Psoas muscle (tissue), 8 donors: ENCODE measurements at regions of chr11 and their contacts with region 1.

Region 1: GRCh38 chr11:67265633-67266423 is 445 bp upstream of the GRK2 start:
- DNase-seq: peak; percentile 85 to 92
- ATAC-seq: peak; percentile 79 to 84 (median 82)
- H3K4me3 ChIP-seq: peak overlapping the region; percentile 47
- H3K27ac ChIP-seq: peak overlapping the region; percentile 62
- H3K4me1 ChIP-seq: peaks cover 46% of the 10 kb centered on the region
- H3K27me3 ChIP-seq: no peaks in the 10 kb centered on the region
- CTCF ChIP-seq: peak; percentile 78

Region 2: DNA sequence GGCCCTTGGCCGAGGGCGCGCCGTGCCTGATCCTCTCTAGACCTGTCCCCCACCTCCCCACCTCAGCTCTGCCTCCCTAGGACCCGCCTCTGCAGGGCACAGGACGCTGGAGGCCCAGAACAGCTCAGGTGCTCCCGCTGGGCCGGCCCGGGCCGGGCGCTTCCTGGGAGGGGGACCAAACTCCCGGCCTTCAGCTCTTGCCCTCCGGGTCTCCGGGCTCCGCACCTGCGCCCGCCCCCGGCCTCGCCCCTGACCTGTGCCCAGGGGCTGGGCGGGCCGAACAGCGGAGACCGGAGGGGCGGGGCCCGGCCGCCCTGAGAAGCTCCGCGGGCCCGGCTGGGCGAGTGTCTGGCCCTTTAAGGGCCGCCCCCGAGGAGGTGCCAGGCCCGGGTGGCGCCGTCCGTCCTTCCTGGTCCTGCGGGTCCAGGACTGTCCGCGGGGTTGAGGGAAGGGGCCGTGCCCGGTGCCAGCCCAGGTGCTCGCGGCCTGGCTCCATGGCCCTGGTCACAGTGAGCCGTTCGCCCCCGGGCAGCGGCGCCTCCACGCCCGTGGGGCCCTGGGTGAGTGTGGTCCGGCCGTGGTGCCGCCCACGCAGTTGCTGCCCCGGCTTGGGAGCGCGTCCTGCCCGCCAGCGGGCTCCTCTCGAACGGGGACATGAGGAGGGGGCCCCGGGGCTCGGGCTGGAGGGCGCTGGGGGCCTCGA is 37.5 kb after region 1 on chr11 and contains the start of gene SSH3:
- intact Hi-C with region 1: loop called in 1 of 2 experiments (anchors 5 kb)
- DNase-seq: peak; percentile 81 to 88
- ATAC-seq: peak; percentile 82 to 90 (median 84)
- H3K4me3 ChIP-seq: peak within 1 kb of the TSS; percentile 97
- H3K27ac ChIP-seq: peak within 1 kb of the TSS; percentile 82
- H3K4me1 ChIP-seq: peaks cover 27% of the 10 kb centered on the region
- H3K27me3 ChIP-seq: no peaks in the 10 kb centered on the region
- CTCF ChIP-seq: no peak
- total RNA-seq, gene SSH3: 3.7 to 10.1 (median 6.9) TPM

Region 3: DNA sequence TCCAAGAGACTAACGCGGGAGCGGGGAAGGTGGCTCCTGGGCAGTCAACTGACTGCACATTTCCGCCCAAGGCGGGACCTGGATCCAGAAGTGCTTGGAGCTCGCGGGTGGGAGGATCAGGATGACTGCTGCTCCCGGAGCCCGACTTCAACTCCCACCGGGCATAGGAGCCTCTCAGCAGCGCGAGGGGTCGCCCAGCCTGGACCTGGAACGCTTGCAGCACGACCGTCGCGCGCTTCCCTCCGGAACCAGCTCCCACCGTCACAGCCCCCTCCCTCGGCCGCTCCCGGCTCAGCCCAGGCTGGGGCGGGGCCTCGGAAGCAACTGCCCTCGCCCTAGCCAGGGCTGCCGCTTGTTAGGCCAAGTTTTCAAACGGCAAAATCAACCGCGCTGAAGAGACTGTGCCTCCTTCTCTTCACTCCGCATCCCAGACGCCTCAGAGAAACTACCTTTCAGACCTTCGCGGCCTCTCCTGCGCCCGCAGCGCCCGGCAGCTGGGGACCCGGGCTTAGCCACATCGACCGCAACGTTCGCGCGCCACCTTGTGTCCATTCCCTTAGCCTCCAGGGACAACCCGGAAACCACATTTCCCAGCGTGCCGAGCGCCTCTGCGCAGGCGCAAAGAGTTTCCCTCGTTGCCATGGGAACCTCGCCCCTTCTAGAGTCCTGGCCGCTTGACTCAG is 51.5 kb after region 1 on chr11:
- intact Hi-C with region 1: loop called (anchors 1 to 2 kb)
- DNase-seq: peak; percentile 96 to 98
- ATAC-seq: peak; percentile 94 to 96 (median 95)
- H3K4me3 ChIP-seq: peak overlapping the region; percentile 97
- H3K27ac ChIP-seq: peak overlapping the region; percentile 86
- H3K4me1 ChIP-seq: peaks cover 16% of the 10 kb centered on the region
- H3K27me3 ChIP-seq: no peaks in the 10 kb centered on the region
- CTCF ChIP-seq: peak; percentile 93

Region 4: GRCh38 chr11:67371212-67371910 is 105.5 kb after region 1 on chr11:
- intact Hi-C with region 1: no loop called
- DNase-seq: peak in 1 of 2 donors; percentile 41
- ATAC-seq: peak in 2 of 4 donors; percentile 26 to 27
- H3K4me3 ChIP-seq: peak overlapping the region; percentile 76
- H3K27ac ChIP-seq: no peak overlapping the region
- H3K4me1 ChIP-seq: peaks cover 16% of the 10 kb centered on the region
- H3K27me3 ChIP-seq: peaks cover 0 to 54% (median 11%) of the 10 kb centered on the region in 3 donors
- CTCF ChIP-seq: peak; percentile 28

Region 5: GRCh38 chr11:67382276-67383136 is 116.7 kb after region 1 on chr11:
- intact Hi-C with region 1: loop called (anchors 5 to 10 kb)
- DNase-seq: peak; percentile 80 to 86
- ATAC-seq: peak; percentile 86 to 95 (median 91)
- H3K4me3 ChIP-seq: no peak overlapping the region
- H3K27ac ChIP-seq: no peak overlapping the region
- H3K4me1 ChIP-seq: no peaks in the 10 kb centered on the region
- H3K27me3 ChIP-seq: no peaks in the 10 kb centered on the region
- CTCF ChIP-seq: peak; percentile 96